ENCODE measurements at regions of chr12 and their contacts with region 1.

Region 1: DNA sequence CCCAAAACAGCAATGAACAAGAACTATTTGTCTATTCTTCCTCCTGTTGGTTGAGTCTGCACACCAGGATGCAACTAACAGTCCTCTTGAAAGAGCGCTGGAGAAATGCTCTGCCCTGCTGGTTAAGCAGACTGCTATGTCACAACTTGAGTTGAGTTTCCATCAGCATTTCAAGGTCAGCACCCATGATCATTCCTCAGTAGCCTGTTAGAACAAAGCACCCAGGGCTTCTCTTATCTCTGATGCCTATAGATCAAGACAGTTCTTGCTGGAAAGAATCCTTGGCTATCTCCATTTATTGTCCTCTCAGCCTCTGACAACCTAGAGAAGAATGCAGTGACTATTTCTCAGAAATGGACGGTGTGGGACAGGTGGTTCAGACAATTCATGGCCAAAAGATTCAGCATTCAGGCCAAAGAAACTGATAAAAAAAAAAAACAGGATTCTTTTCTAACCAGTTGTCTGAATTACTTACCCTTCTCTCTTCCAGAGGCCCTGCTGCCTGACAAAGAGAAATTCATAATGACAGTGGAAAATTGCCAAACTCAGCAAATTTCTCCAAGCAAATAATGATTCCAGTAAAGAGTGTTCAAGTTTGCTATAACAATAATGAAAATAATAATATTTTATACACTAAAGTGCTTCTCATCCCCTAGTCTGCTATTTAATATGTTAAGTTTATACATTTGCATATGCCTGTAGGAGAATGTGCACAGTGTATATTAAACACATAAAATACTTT is 306.7 kb downstream of the EMP1 start:
- DNase-seq: peak; percentile 62 to 67
- H3K4me3 ChIP-seq: no peak overlapping the region
- H3K4me3 Mint-ChIP-seq: no peak overlapping the region
- H3K27ac Mint-ChIP-seq: no peak overlapping the region
- H3K4me1 ChIP-seq: peaks cover 14% of the 10 kb centered on the region; the same call in 1 of the 2 replicates
- H3K4me1 Mint-ChIP-seq: no peaks in the 10 kb centered on the region
- H3K27me3 ChIP-seq: no peaks in the 10 kb centered on the region
- H3K27me3 Mint-ChIP-seq: no peaks in the 10 kb centered on the region
- CTCF ChIP-seq: no peak

Region 2: DNA sequence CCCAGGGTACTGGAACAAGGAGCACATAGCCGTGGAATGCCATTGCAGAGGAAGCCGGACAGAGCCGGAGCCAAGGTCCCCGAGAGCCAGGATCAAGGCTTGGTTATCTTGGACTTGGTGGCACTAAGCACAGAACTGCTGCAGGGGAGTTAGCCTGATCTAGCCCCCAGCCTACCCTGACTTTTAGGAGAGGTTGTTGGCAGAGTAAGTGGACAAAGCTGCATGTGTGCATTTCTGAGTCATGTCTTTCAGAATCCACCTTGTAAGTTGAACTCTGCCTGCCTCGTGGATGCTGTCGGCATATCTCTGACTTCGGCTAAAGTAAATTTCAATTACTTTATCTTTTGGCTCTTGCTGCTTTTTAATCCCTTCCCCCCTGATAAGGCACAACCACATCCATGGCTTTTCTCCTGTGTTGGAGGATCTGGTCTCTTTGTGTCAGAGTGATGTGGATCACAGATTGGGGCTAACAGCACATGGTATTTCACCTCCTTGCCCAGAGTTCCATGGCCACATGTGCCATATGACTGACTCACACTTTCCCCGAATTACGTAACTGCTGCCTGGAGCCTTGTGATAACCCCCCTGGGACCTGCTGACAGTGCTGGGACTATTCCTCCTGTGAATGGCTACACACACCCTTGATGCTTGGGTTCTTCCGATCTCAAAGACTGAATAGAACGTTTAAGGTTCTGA is 66.4 kb before region 1 on chr12:
- CTCF ChIA-PET with region 1: no interaction called
- POLR2A ChIA-PET with region 1: no interaction called
- intact Hi-C with region 1: loop called (anchors 1 kb)
- DNase-seq: peak in 1 of 2 experiments; percentile 23
- H3K4me3 ChIP-seq: no peak overlapping the region
- H3K4me3 Mint-ChIP-seq: no peak overlapping the region
- H3K27ac Mint-ChIP-seq: no peak overlapping the region
- H3K4me1 ChIP-seq: peaks cover 7% of the 10 kb centered on the region; the same call in 1 of the 2 replicates
- H3K4me1 Mint-ChIP-seq: peaks cover 11% of the 10 kb centered on the region
- H3K27me3 ChIP-seq: no peaks in the 10 kb centered on the region
- H3K27me3 Mint-ChIP-seq: peaks cover 5% of the 10 kb centered on the region
- CTCF ChIP-seq: no peak

Region 3: DNA sequence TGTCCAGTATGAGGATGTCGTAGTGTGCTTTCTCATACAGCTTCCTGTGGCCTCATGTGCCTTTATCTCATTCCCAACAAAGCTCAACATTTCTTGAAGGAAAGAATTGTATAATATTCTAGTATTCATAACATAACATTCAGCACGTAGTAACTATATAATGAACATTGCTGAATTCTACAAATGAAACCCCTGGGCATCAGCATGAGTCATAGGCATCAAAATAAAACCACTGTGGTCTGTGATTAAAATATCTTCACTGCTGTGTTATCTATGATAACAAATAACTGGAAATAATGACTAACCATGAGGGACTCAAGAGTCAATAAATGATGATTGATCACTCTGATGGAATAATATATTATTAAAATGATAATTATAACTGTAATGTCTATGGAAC is 51.5 kb before region 1 on chr12:
- CTCF ChIA-PET with region 1: no interaction called
- POLR2A ChIA-PET with region 1: no interaction called
- intact Hi-C with region 1: no loop called
- DNase-seq: no peak
- H3K4me3 ChIP-seq: no peak overlapping the region
- H3K4me3 Mint-ChIP-seq: no peak overlapping the region
- H3K27ac Mint-ChIP-seq: no peak overlapping the region
- H3K4me1 ChIP-seq: no peaks in the 10 kb centered on the region
- H3K4me1 Mint-ChIP-seq: no peaks in the 10 kb centered on the region
- H3K27me3 ChIP-seq: no peaks in the 10 kb centered on the region
- H3K27me3 Mint-ChIP-seq: peaks cover 3% of the 10 kb centered on the region
- CTCF ChIP-seq: no peak

Region 4: GRCh38 chr12:13465635-13466034 is 37.6 kb before region 1 on chr12:
- CTCF ChIA-PET with region 1: no interaction called
- POLR2A ChIA-PET with region 1: no interaction called
- intact Hi-C with region 1: no loop called
- DNase-seq: no peak
- H3K4me3 ChIP-seq: no peak overlapping the region
- H3K4me3 Mint-ChIP-seq: no peak overlapping the region
- H3K27ac Mint-ChIP-seq: no peak overlapping the region
- H3K4me1 ChIP-seq: no peaks in the 10 kb centered on the region
- H3K4me1 Mint-ChIP-seq: peaks cover 6% of the 10 kb centered on the region
- H3K27me3 ChIP-seq: no peaks in the 10 kb centered on the region
- H3K27me3 Mint-ChIP-seq: peaks cover 12% of the 10 kb centered on the region
- CTCF ChIP-seq: no peak

Measured in Caco-2 (cell line).